Breast epithelium (tissue), 4 donors: ENCODE measurements at regions of chr1 and their contacts with region 1.

Region 1: GRCh38 chr1:151340870-151341754 is 5.9 kb downstream of the RFX5 start:
- DNase-seq: no peak
- H3K4me3 ChIP-seq: no peak overlapping the region
- H3K27ac ChIP-seq: peak overlapping the region; percentile 2 to 56
- H3K4me1 ChIP-seq: no peaks in the 10 kb centered on the region
- H3K27me3 ChIP-seq: no peaks in the 10 kb centered on the region
- CTCF ChIP-seq: peak; percentile 78 to 83 (median 81)
- POLR2A ChIP-seq: no peak

Region 2: GRCh38 chr1:151294742-151295462 is 46.2 kb before region 1 on chr1:
- intact Hi-C with region 1: loop called (anchors 5 kb)
- DNase-seq: no peak
- H3K4me3 ChIP-seq: no peak overlapping the region
- H3K27ac ChIP-seq: no peak overlapping the region
- H3K4me1 ChIP-seq: no peaks in the 10 kb centered on the region
- H3K27me3 ChIP-seq: no peaks in the 10 kb centered on the region
- CTCF ChIP-seq: no peak
- POLR2A ChIP-seq: no peak